Activated naive CD4-positive, alpha-beta T cell treated with anti-CD3 and anti-CD28 coated beads for 36 hours (primary cell): ENCODE measurements at regions of chr11 and their contacts with region 1.

Region 1: GRCh38 chr11:93895106-93895862 is 44.9 kb upstream of the VSTM5 start:
- DNase-seq: peak; percentile 42
- H3K4me3 Mint-ChIP-seq: no peak overlapping the region
- H3K27ac Mint-ChIP-seq: no peak overlapping the region
- H3K4me1 Mint-ChIP-seq: no peaks in the 10 kb centered on the region
- H3K27me3 Mint-ChIP-seq: peaks cover 40% of the 10 kb centered on the region

Region 2: DNA sequence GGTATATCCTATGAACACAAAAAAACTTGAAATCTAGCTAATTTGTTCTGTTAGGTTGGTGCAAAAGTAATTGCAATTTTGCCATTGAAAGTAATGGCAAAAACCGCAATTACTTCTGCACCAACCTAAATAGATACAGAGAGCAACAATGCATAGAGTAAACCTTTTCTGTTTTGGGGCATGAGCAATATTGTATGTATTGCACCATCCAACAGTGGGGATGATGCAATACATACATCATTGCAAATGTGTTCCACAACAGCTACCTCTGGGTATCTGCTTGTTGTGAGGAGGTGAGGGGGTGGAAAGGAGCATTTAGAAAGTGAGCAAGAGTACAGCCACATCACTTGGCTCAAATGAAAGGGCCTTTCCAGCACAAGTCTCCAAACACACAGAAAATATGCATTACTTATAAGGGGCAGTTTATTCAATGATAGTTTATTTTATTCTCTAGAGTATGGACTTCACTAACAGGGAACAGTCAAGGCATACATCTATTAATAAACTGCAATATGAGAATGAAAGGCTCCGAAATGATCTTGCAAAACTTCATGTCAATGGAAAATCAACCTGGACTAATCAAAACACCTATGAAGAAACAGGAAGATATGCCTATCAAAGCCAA is 487.4 kb before region 1 on chr11:
- CTCF ChIA-PET with region 1: no interaction called
- intact Hi-C with region 1: no loop called
- DNase-seq: no peak
- H3K4me3 Mint-ChIP-seq: no peak overlapping the region
- H3K27ac Mint-ChIP-seq: no peak overlapping the region
- H3K4me1 Mint-ChIP-seq: no peaks in the 10 kb centered on the region
- H3K27me3 Mint-ChIP-seq: peaks cover 5% of the 10 kb centered on the region

Region 3: DNA sequence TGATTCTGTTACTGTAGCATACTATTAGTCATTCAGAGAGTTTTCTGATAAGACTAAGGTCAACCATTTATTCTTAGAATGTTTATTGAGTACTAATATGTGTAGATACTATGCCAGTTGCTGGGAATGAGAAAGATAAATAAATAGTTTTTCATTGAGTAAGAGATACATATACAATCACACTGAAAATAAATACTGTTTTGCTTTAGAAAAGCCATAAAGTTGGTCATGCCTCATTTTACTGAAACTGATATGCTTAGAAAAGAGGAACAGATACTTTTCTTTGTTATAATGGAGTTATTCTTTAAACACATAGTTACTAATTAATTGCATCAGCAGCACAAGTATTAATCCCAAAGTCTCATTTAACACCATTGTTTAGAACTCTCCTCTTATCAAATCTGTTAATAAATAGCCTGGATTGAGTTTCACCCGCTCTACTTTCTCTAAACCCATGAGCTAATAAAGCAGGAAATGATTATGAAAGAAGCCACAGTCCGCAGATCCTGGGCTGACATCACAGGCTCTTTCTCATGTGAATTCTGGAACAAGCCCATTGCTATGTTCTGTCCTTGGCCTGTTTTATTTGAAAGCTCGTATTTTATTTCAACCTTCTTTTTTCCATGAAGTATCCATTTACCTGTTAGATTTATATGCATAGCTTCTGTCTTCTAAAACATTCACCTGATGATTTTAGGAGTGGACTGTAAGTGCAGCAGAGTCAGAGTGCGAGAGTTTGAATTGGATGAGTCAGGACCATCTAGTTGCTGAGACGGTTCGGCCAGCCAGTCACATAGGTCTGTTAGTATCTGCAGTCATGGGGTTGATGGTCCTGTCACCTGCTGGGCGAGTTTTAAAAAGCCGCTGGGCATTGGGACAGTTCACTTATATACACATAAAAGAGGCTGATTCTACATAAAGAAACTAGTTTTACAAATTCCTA is 707.4 kb after region 1 on chr11:
- CTCF ChIA-PET with region 1: interaction called, 3 read pairs
- intact Hi-C with region 1: loop called (anchors 10 kb)
- DNase-seq: peak; percentile 63
- H3K4me3 Mint-ChIP-seq: no peak overlapping the region
- H3K27ac Mint-ChIP-seq: no peak overlapping the region
- H3K4me1 Mint-ChIP-seq: no peaks in the 10 kb centered on the region
- H3K27me3 Mint-ChIP-seq: no peaks in the 10 kb centered on the region

Region 4: DNA sequence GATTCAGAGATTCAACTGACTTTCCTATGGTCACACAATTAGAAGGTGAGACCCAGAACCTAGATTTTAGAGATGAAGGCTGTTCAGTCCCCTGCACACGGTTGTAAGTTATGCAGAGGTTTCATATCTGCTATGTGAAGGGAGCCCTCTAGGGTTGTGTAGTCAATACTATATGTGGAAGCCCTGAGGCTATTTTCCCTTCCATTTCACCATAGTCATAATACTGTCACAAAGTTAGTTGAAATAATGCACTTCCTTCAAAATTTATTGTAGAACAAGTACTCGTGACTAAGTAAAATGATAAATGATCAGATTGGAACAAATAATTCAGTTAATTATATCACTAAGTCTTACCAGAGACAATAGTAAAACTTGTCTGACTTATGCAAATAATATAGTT is 1243.2 kb after region 1 on chr11:
- CTCF ChIA-PET with region 1: no interaction called
- intact Hi-C with region 1: loop called (anchors 10 kb)
- DNase-seq: no peak
- H3K4me3 Mint-ChIP-seq: no peak overlapping the region
- H3K27ac Mint-ChIP-seq: no peak overlapping the region
- H3K4me1 Mint-ChIP-seq: peaks cover 7% of the 10 kb centered on the region
- H3K27me3 Mint-ChIP-seq: peaks cover 9% of the 10 kb centered on the region